ENCODE measurements at regions of chr10 and their contacts with region 1.

Region 1: DNA sequence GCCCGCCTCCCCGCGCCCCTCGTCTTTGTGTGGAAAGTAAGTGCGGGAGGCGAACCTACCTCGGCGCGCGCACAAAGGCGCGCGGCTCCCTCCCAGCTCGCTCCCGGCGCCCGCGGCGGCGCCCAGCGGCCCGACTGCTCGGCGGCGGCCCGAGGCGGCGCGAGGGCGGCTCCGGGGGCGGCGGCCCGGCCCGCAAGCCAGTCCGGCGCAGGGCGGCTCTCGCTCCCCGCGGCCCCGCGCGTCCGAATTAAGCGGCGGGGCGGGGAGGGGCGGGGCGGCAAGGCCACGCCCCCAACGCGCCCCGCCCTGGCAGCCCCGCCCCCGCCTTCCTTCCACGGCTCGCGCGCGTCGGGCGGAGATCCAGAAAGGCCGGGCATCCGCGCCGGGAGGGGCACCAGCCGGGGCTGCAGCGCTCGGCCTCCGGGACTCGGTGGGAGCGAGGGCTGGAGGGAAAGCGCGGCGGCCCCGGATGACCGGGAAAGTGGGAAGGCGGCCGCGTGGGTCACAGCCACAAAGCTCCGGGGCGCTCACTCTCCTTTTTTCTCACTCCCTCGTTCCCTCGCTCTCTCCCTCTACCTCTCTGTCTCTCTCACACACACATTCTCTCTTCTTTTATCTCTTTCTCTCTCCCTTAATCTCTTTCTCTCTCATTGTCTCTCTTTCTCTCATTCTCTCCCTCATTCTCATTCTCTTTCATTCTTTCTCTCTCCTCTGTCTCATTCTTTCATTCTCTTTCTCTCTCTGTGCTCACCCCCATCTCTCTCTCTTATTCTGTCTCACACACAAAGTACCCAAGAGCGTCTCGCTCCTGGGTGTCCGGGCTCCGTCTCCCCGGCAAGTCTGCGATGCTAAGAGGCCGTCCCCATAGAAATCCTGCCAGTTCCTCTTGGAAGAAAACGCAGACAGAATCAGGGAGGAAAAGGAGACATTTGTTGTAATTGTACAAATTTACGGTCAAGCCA is 170.2 kb downstream of the FAM107B start:
- DNase-seq: peak; percentile 73 to 97 (median 79)

Region 2: DNA sequence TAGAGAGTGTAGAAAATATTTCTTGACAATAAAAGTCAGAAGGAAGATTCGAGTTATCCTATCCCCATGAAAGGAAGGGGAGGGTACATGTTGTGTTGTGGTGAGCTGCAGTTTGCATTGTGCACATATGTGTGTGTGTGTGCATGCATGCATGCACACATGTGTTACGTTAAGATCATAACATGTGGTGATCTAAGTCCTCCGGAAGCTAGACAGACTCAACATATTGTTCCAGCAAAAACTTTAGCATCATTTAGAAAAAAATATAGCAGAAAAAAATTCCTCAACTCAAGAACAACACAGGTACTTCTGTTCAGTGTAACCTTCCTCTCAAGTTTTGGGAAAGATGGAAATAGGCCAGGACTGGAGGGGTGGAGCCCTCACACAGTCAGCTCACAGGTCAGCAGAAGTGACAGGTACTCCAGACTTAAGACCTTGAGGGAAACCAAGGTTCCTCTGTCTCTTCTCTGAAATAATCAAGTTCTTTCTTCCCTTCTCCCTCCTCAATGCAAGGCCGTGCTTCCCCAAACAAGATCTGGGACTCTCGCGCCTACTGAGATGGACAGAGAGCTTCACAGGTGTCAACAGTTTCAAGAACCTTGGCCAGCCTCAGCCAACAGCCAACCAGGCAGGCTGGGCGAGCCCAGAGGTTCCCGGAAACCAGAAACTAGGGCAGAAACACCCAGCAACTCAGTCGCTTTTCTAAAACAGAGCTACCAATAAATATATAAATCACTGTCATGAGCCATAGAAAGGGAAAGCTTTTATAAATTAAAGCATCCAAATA is 35.0 kb before region 1 on chr10:
- intact Hi-C with region 1: loop called (anchors 5 kb)
- DNase-seq: no peak

Region 3: DNA sequence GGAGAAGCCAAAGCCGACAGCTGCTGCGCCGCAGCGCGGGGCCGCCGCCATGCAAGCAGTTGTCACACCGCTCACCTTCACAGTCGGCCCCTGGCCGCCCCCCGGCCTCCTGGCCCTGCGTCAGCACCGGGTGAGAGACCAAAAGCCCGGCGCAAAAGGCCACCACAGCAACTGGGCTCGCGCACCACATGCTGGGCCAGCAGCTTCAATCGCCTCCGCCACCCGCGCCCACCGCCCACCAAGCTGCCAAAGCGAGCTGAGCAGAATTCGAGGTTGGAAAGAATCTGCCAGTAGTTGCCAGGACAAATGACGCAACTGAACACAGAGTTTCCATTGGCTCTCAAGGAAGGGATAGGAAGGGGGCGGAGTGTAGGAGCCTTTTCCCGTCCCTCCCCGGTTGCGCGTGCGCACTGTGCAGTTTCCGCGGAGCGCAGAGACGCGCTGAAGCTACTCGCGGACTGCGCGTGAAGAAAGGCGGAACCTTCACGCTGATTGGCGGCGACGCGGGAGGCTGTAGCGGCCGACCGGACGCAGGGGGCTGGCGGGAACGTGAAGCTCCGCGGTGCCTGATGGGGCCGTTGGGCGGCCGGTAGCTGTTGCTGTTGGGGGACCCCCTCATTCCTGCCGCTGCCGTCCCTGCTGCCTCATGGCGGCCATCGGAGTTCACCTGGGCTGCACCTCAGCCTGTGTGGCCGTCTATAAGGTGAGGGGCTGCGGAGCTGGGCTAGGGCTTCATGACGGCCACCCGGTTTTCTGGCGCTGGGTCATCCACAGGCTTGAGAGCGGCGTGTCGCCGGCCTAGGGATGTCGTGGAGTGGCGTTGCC is 233.5 kb after region 1 on chr10 and contains the starts of genes CDNF, HSPA14 and MSANTD7:
- intact Hi-C with region 1: loop called (anchors 5 kb)
- DNase-seq: peak; percentile 98 to 100 (median 99)

Region 4: GRCh38 chr10:14953424-14954000 is 349.1 kb after region 1 on chr10:
- intact Hi-C with region 1: no loop called
- DNase-seq: peak in 1 of 10 donors; percentile 31

Measured in posterior cingulate gyrus (tissue), 11 donors.